Activated T-helper 1 cell treated with anti-CD3 and anti-CD28 coated beads, Interleukin-12 subunit alpha, Interleukin-12 subunit beta, Interleukin-2, Interleukin-4 antibody, amounts not matched to agents 30 ng/mL and 10 ng/mL and 1 ng/mL, durations not matched to agents 14 hours and 24 hours and 36 hours (primary cell): ENCODE measurements at regions of chr4 and their contacts with region 1.

Region 1: DNA sequence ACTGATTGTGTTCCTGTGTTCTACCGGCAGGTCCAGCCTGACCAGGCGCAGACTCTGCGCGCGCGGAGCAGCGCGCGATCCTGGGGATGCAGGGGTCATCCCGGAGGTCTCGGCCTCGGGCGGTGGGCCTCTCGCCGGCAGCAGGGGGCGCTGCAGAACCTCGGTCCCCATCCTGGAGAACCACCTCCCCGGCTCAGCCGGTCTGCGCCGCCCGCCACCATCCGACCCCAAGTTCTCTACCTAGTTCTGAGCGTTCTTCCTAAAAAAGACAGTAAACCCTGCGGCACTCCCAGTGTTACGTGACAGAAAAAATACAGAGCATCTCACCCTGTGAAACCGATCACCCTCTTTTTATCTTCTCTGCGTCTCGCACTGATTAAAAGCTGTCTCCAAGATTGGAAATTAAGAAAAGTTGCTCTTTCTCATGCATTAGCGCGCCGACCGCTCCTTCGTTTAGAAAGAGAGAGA is 1.6 kb downstream of the TRPC3 start:
- DNase-seq: peak; percentile 74
- H3K4me3 Mint-ChIP-seq: peak overlapping the region; percentile 89
- H3K27ac Mint-ChIP-seq: peak overlapping the region; percentile 46
- H3K4me1 Mint-ChIP-seq: peaks cover 26% of the 10 kb centered on the region
- H3K27me3 Mint-ChIP-seq: peaks cover 50% of the 10 kb centered on the region

Region 2: DNA sequence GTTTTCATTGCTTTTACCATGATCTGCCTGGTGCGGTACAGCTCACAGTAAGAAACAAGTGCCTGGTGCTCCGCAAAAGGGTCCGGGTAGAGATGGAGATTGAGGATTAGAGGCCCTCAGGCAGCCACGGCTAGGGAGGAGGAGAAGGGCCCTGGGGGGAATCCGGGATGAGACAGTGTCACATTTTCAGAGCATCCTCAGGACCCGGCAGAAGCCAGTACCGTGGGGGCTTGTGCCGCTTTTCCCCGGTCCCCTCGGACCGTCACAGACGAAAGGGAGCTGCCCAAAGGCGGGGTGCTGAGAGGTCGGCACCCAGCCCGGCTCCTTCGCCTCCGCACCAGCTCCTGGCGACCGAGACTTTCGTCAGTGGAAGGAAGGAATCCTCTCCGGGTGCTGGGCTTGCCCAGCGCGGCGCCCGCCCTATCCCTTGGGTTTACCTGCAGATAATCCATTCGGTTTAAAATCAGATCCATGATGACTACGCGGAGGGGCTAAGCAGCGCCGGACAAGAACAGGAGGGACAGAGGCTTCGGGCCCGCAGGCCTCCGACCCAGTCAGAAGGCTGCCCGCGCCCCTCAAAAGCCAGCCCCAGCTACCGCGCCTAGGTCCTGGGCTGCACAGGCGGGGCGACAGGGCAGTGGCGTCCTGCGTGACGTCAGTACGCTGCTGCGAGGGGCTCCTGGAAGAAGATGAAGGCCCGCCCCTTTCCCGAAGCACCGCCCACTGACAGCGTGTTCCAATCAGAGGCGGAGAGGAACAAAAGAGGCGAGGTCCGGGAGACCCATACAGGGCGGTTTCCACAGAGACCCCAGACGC is 80.2 kb before region 1 on chr4 and contains the start of gene BBS7:
- intact Hi-C with region 1: loop called (anchors 2 kb)
- DNase-seq: peak; percentile 94
- H3K4me3 Mint-ChIP-seq: peak within 1 kb of the TSS; percentile 99
- H3K27ac Mint-ChIP-seq: peak within 1 kb of the TSS; percentile 91
- H3K4me1 Mint-ChIP-seq: peaks cover 23% of the 10 kb centered on the region
- H3K27me3 Mint-ChIP-seq: peaks cover 22% of the 10 kb centered on the region
- total RNA-seq, gene BBS7: 16.9 and 20.2 TPM in 2 replicates

Region 3: GRCh38 chr4:121989715-121990114 is 39.5 kb after region 1 on chr4:
- intact Hi-C with region 1: no loop called
- DNase-seq: no peak
- H3K4me3 Mint-ChIP-seq: no peak overlapping the region
- H3K27ac Mint-ChIP-seq: no peak overlapping the region
- H3K4me1 Mint-ChIP-seq: no peaks in the 10 kb centered on the region
- H3K27me3 Mint-ChIP-seq: peaks cover 29% of the 10 kb centered on the region

Region 4: GRCh38 chr4:122003335-122003734 is 53.1 kb after region 1 on chr4:
- intact Hi-C with region 1: loop called (anchors 1 kb)
- DNase-seq: no peak
- H3K4me3 Mint-ChIP-seq: no peak overlapping the region
- H3K27ac Mint-ChIP-seq: no peak overlapping the region
- H3K4me1 Mint-ChIP-seq: peaks cover 14% of the 10 kb centered on the region
- H3K27me3 Mint-ChIP-seq: peaks cover 5% of the 10 kb centered on the region

Region 5: DNA sequence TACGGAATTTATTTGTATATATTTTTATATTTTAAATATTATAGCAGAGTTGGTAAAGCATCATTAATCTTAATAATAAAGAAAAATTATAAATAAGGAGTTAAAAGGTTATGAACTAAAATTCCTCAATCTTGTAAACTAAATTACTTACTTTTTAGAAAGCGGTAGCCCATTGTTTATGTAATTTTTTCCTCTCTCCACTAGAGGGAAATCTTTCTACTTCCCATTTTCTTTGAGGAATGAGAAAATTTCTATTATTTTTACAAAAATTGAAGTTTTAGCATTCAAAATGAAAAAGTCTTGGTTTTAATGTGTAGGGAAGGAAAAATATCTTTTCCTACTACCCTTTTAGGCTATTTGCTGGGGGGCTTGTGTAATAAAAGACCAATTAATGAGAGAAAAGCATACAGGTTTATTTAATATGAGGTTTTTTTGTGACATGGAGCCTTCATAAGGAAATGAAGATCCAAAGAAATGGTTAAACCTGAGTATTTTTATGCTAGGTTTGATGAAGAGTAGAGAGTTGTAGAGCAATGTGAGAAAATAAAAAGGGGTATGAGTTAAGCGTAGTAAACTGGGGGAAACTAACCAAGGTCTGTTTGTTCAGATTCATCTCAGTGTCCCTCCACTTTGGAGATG is 359.9 kb after region 1 on chr4:
- intact Hi-C with region 1: loop called (anchors 2 kb)
- DNase-seq: no peak
- H3K4me3 Mint-ChIP-seq: no peak overlapping the region
- H3K27ac Mint-ChIP-seq: no peak overlapping the region
- H3K4me1 Mint-ChIP-seq: peaks cover 6% of the 10 kb centered on the region
- H3K27me3 Mint-ChIP-seq: no peaks in the 10 kb centered on the region

Region 6: GRCh38 chr4:122652379-122652778 is 702.1 kb after region 1 on chr4:
- intact Hi-C with region 1: loop called (anchors 10 kb)
- DNase-seq: peak; percentile 38
- H3K4me3 Mint-ChIP-seq: no peak overlapping the region
- H3K27ac Mint-ChIP-seq: no peak overlapping the region
- H3K4me1 Mint-ChIP-seq: peaks cover 23% of the 10 kb centered on the region
- H3K27me3 Mint-ChIP-seq: no peaks in the 10 kb centered on the region

Region 7: DNA sequence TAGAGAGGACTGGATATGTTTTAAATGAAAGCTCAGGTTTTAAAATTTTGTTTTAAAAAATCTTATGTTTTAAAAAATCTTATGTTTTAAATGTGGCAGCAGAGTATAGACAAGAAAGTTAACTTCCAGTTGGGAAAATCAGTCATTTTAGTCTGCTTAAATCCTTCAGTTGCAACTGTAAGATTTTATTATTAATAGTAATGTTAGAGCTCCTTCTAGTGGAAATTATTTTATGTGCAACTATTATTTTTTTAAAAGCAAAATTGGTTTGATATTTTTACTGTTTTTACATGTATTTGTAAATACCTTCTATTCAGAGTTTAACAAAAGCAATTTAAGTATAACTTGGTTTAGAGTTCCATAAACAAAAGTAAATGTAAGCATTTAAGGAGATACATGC is 980.6 kb after region 1 on chr4:
- intact Hi-C with region 1: loop called (anchors 2 kb)
- DNase-seq: no peak
- H3K4me3 Mint-ChIP-seq: no peak overlapping the region
- H3K27ac Mint-ChIP-seq: no peak overlapping the region
- H3K4me1 Mint-ChIP-seq: peaks cover 31% of the 10 kb centered on the region
- H3K27me3 Mint-ChIP-seq: no peaks in the 10 kb centered on the region